CD4-positive, alpha-beta memory T cell (primary cell): ENCODE measurements at regions of chr11 and their contacts with region 1.

Region 1: GRCh38 chr11:96284917-96285316 is 58.1 kb downstream of the MAML2 start:
- DNase-seq: no peak
- H3K4me3 ChIP-seq: no peak overlapping the region
- H3K4me3 Mint-ChIP-seq: peak overlapping the region in 2 of 8 donors; percentile 11 to 12
- H3K27ac ChIP-seq: no peak overlapping the region
- H3K27ac Mint-ChIP-seq: peak overlapping the region in 1 of 7 donors; percentile 8
- H3K4me1 ChIP-seq: peaks cover 65% of the 10 kb centered on the region
- H3K4me1 Mint-ChIP-seq: peaks cover 44 to 75% (median 59%) of the 10 kb centered on the region in 4 donors
- H3K27me3 ChIP-seq: no peaks in the 10 kb centered on the region
- H3K27me3 Mint-ChIP-seq: no peaks in the 10 kb centered on the region

Region 2: GRCh38 chr11:96299155-96299888 is 14.4 kb after region 1 on chr11:
- CTCF ChIA-PET with region 1: interaction called, 3 read pairs
- POLR2A ChIA-PET with region 1: interaction called, 4 read pairs
- intact Hi-C with region 1: loop called (anchors 2 kb)
- DNase-seq: no peak
- H3K4me3 ChIP-seq: no peak overlapping the region
- H3K4me3 Mint-ChIP-seq: no peak overlapping the region
- H3K27ac ChIP-seq: no peak overlapping the region
- H3K27ac Mint-ChIP-seq: peak overlapping the region in 6 of 7 donors; percentile 15 to 87 (median 50)
- H3K4me1 ChIP-seq: peaks cover 22% of the 10 kb centered on the region
- H3K4me1 Mint-ChIP-seq: peaks cover 47 to 72% (median 56%) of the 10 kb centered on the region in 4 donors
- H3K27me3 ChIP-seq: no peaks in the 10 kb centered on the region
- H3K27me3 Mint-ChIP-seq: no peaks in the 10 kb centered on the region